Caco-2 (cell line): ENCODE measurements at regions of chr1 and their contacts with region 1.

Region 1: GRCh38 chr1:212035123-212035834 is at the starts of genes DTL and INTS7:
- DNase-seq: peak; percentile 98 to 99
- H3K4me3 ChIP-seq: peak within 1 kb of the TSS; percentile 85
- H3K4me3 Mint-ChIP-seq: peak within 1 kb of the TSS; percentile 96
- H3K27ac Mint-ChIP-seq: peak within 1 kb of the TSS; percentile 96
- H3K4me1 ChIP-seq: no peaks in the 10 kb centered on the region; the same call in 1 of the 2 replicates
- H3K4me1 Mint-ChIP-seq: peaks cover 35% of the 10 kb centered on the region
- H3K27me3 ChIP-seq: no peaks in the 10 kb centered on the region
- H3K27me3 Mint-ChIP-seq: no peaks in the 10 kb centered on the region
- CTCF ChIP-seq: peak; percentile 88 to 89
- total RNA-seq, gene DTL: 20.3 and 23.6 TPM in 2 replicates
- total RNA-seq, gene INTS7: 28.1 and 31.9 TPM in 2 replicates

Region 2: GRCh38 chr1:211675230-211676105 is 359.8 kb before region 1 on chr1 and contains the start of gene NEK2:
- CTCF ChIA-PET with region 1: interaction called, 109 read pairs
- POLR2A ChIA-PET with region 1: interaction called, 14 read pairs
- intact Hi-C with region 1: loop called (anchors 1 kb)
- DNase-seq: peak; percentile 96 to 98
- H3K4me3 ChIP-seq: peak within 1 kb of the TSS; percentile 83
- H3K4me3 Mint-ChIP-seq: peak within 1 kb of the TSS; percentile 91
- H3K27ac Mint-ChIP-seq: peak within 1 kb of the TSS; percentile 95
- H3K4me1 ChIP-seq: no peaks in the 10 kb centered on the region
- H3K4me1 Mint-ChIP-seq: peaks cover 17% of the 10 kb centered on the region
- H3K27me3 ChIP-seq: no peaks in the 10 kb centered on the region
- H3K27me3 Mint-ChIP-seq: no peaks in the 10 kb centered on the region
- CTCF ChIP-seq: no peak
- total RNA-seq, gene NEK2: 32.1 and 34.7 TPM in 2 replicates

Region 3: DNA sequence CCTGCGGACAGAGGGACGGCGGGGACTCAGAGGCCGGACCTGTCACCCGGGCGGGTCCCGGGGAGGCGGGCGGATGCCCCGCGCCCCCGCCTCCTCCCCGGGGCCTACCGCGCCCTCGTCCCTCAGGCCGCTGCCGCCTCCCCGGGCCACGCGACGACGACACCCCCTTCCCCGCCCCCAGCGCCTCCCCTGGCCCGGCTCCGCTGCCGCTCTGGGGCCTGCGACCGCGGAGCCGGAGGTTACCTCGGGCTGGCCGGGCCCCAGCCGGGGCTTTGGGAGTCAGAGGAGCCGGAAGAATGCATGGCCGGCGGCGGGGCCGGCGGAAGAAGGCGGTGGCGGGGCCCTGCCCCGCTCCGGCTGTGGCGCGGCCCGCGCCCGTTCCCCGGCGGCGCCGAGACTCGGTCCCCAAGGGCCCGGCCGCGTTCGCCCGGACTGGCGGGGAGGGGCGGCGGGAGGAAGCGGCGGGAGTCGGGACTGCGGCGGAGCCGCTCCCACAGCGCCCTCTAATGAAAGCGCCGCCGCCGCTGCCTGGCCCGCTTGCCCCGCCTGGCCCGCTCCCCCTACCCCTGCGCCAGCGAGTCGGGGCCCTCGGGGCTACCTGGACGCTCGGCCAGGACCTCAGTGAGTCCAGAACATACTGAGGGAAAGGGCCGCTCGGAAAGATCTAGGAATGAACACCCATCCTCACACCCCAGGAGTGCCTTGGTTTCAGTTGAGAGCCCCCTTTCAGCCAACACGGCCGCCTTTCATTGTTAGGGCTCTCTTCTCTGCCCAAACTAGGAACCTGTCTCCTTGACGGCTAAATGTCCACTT is 204.7 kb before region 1 on chr1 and contains the start of gene LPGAT1:
- CTCF ChIA-PET with region 1: interaction called, 3 read pairs
- POLR2A ChIA-PET with region 1: no interaction called
- intact Hi-C with region 1: loop called (anchors 10 kb)
- DNase-seq: peak; percentile 70 to 87
- H3K4me3 ChIP-seq: peak within 1 kb of the TSS; percentile 56
- H3K4me3 Mint-ChIP-seq: peak within 1 kb of the TSS; percentile 96
- H3K27ac Mint-ChIP-seq: peak within 1 kb of the TSS; percentile 76
- H3K4me1 ChIP-seq: no peaks in the 10 kb centered on the region
- H3K4me1 Mint-ChIP-seq: peaks cover 5% of the 10 kb centered on the region
- H3K27me3 ChIP-seq: no peaks in the 10 kb centered on the region
- H3K27me3 Mint-ChIP-seq: no peaks in the 10 kb centered on the region
- CTCF ChIP-seq: peak; percentile 49 to 55
- total RNA-seq, gene LPGAT1: 25.6 and 34.0 TPM in 2 replicates

Region 4: GRCh38 chr1:211895126-211895759 is 140.0 kb before region 1 on chr1:
- CTCF ChIA-PET with region 1: no interaction called
- POLR2A ChIA-PET with region 1: no interaction called
- intact Hi-C with region 1: loop called (anchors 1 kb)
- DNase-seq: peak; percentile 46 to 76
- H3K4me3 ChIP-seq: no peak overlapping the region
- H3K4me3 Mint-ChIP-seq: no peak overlapping the region
- H3K27ac Mint-ChIP-seq: peak overlapping the region; percentile 7
- H3K4me1 ChIP-seq: peaks cover 16% of the 10 kb centered on the region
- H3K4me1 Mint-ChIP-seq: peaks cover 11% of the 10 kb centered on the region
- H3K27me3 ChIP-seq: no peaks in the 10 kb centered on the region
- H3K27me3 Mint-ChIP-seq: no peaks in the 10 kb centered on the region
- CTCF ChIP-seq: no peak

Region 5: DNA sequence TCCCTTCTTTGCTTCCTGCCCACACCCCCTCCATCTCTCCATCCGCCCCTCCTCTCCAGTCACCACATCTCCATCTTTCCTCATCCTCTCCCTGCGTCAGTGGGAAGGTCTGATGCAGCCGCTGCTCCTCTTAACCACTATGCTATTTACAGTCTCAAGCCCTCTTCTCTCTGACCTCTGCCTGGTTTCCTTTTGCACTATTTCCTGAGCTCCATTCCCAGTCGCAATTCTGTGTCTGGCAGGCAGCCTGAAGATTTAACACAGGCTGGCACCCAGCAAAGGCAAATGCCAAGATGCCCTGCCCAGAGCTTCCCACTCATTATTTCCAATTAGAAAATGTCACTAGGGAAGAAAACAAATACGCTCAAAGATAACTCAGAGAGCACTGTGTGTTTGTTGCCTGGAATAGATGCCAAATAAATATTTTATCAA is 115.1 kb before region 1 on chr1:
- CTCF ChIA-PET with region 1: no interaction called
- POLR2A ChIA-PET with region 1: no interaction called
- intact Hi-C with region 1: no loop called
- DNase-seq: no peak
- H3K4me3 ChIP-seq: no peak overlapping the region
- H3K4me3 Mint-ChIP-seq: no peak overlapping the region
- H3K27ac Mint-ChIP-seq: no peak overlapping the region
- H3K4me1 ChIP-seq: peaks cover 23% of the 10 kb centered on the region
- H3K4me1 Mint-ChIP-seq: peaks cover 30% of the 10 kb centered on the region
- H3K27me3 ChIP-seq: no peaks in the 10 kb centered on the region
- H3K27me3 Mint-ChIP-seq: no peaks in the 10 kb centered on the region
- CTCF ChIP-seq: no peak

Region 6: DNA sequence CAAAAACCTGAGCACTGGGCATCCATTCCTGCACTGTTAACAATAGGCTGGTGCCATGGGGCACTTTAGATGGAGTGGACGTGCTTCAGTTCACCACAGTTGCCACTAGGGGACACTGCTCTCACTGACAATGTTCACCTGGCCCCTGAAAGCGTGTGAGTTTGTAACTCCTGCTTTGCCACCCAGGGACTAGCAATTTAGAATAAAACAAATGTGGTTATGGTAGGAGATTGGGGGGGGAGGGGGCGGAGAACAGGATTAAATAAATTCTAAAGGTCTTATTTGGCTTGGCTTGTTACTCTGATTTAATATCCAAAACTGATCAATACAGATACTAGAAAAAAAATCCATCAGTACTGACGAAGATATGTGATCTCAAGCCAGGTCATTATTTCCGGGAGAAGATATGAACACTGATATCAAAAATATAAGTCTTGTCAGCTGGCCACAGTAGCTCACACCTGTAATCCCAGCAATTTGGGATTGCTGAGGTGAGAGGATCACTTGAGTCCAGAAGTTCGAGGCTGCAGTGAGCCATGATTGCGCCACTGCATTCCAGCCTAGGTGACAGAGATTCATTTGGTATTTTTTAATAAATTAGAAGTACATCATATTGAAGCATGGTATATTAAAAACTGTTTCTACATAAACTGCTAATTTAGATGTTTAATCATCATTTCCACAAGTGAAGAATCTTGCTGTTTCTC is 23.1 kb before region 1 on chr1:
- CTCF ChIA-PET with region 1: interaction called, 49 read pairs
- POLR2A ChIA-PET with region 1: interaction called, 15 read pairs
- intact Hi-C with region 1: loop called (anchors 1 kb)
- DNase-seq: peak; percentile 68 to 74
- H3K4me3 ChIP-seq: no peak overlapping the region
- H3K4me3 Mint-ChIP-seq: no peak overlapping the region
- H3K27ac Mint-ChIP-seq: no peak overlapping the region
- H3K4me1 ChIP-seq: peaks cover 25% of the 10 kb centered on the region
- H3K4me1 Mint-ChIP-seq: peaks cover 19% of the 10 kb centered on the region
- H3K27me3 ChIP-seq: no peaks in the 10 kb centered on the region
- H3K27me3 Mint-ChIP-seq: no peaks in the 10 kb centered on the region
- CTCF ChIP-seq: peak; percentile 88 to 94

Region 7: DNA sequence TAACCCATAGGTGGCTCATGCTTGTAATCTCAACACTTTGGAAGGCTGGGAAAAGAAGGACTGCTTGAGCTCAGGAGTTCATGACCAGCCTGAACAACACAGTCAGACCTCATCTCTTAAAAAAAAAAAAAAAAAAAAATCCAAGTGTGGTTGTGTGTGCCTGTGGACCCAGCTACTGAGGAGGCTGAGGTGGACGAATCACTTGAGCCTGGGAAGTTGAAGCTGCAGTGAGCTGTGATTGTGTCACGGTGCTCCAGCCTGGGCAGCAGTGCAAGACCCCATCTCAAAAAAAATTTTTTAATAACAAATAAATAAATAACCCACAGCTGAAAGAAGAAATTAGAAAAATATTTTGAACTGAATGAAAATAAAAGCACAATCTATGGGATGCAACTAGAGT is 13.7 kb before region 1 on chr1:
- CTCF ChIA-PET with region 1: interaction called, 10 read pairs
- POLR2A ChIA-PET with region 1: no interaction called
- intact Hi-C with region 1: no loop called
- DNase-seq: no peak
- H3K4me3 ChIP-seq: no peak overlapping the region
- H3K4me3 Mint-ChIP-seq: no peak overlapping the region
- H3K27ac Mint-ChIP-seq: no peak overlapping the region
- H3K4me1 ChIP-seq: no peaks in the 10 kb centered on the region
- H3K4me1 Mint-ChIP-seq: no peaks in the 10 kb centered on the region
- H3K27me3 ChIP-seq: no peaks in the 10 kb centered on the region
- H3K27me3 Mint-ChIP-seq: no peaks in the 10 kb centered on the region
- CTCF ChIP-seq: no peak

Region 8: DNA sequence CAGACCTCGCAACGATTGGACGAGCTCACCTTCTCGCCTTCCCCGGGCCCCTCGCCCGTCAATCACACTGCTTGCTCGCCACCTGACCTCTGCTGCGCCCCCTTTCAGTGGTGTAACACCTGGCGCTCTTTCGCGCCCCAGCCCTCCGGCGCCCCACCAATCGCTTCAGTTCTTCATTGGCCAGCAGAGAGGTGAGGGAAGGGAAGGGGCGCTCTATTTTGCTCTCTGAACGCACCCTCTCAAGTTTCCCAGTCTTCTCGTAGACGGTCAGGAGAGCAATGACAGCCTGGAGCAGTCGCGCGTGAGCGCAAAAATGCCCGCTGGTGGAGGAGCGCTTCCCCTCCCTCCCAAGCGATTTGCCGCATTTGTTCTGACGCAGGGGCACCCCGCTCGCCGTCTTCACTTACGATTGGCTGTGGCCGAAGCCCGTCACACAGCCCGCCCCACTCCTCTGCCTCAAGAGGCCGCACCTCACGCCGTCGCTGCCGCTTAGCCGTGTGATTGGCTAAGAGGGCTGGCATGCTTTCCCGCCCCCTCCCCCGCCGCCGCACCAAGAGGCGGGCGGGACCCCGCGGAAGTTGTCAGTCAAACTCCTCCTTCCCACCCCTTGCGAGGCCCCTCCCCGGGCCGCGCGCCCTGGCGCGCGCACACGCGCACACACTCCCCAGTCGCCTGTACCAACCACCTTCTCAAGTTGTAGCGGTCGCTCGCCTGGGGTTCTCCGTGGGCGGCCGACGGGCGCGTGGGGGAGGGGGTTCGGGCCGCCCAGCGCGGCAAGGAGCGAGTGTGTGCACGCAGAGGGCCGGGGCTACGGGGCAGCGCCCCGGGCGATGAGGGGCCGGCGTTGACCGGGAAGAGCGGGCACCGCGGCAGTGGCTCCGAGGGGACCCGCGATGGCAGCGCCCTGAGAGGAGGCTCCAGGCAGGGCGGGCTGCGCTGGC is 249.7 kb after region 1 on chr1 and contains the start of gene PPP2R5A:
- CTCF ChIA-PET with region 1: interaction called, 8 read pairs
- POLR2A ChIA-PET with region 1: interaction called, 11 read pairs
- intact Hi-C with region 1: no loop called
- DNase-seq: peak; percentile 99
- H3K4me3 ChIP-seq: peak within 1 kb of the TSS; percentile 57
- H3K4me3 Mint-ChIP-seq: peak within 1 kb of the TSS; percentile 95
- H3K27ac Mint-ChIP-seq: peak within 1 kb of the TSS; percentile 89
- H3K4me1 ChIP-seq: peaks cover 21% of the 10 kb centered on the region
- H3K4me1 Mint-ChIP-seq: peaks cover 13% of the 10 kb centered on the region
- H3K27me3 ChIP-seq: no peaks in the 10 kb centered on the region
- H3K27me3 Mint-ChIP-seq: no peaks in the 10 kb centered on the region
- CTCF ChIP-seq: peak; percentile 57 to 68
- total RNA-seq, gene PPP2R5A: 47.6 and 49.4 TPM in 2 replicates